ENCODE measurements at regions of chr3 and their contacts with region 1.

Region 1: GRCh38 chr3:128095222-128095703 is 28.3 kb downstream of the RUVBL1 start:
- DNase-seq: peak; percentile 65 to 87 (median 80)
- ATAC-seq: peak; percentile 99
- H3K4me3 ChIP-seq: no peak overlapping the region
- H3K4me3 Mint-ChIP-seq: no peak overlapping the region
- H3K27ac ChIP-seq: no peak overlapping the region
- H3K27ac Mint-ChIP-seq: peak overlapping the region; percentile 42
- H3K4me1 ChIP-seq: peaks cover 6% of the 10 kb centered on the region
- H3K4me1 Mint-ChIP-seq: peaks cover 11% of the 10 kb centered on the region
- H3K27me3 ChIP-seq: no peaks in the 10 kb centered on the region
- H3K27me3 Mint-ChIP-seq: no peaks in the 10 kb centered on the region
- CTCF ChIP-seq: peak; percentile 69

Region 2: DNA sequence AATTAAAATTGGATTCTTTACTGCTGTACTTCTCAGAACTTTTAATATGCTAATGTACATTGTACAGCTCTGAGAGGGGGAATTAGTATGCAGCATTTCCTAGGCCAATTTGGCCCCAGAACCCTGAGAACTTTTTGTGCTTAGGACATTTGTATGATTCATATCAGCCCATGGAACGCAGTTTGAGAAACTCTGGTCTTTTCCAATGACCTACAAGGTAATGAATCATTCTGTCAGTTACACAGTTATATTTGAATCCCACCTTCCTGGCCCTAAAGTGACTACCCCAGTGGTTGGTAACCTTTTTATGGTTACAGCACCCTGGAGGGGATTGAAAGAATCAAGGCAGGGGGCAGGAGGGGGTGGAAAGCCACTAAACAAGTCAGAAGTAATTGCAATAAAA is 205.8 kb before region 1 on chr3:
- CTCF ChIA-PET with region 1: no interaction called
- POLR2A ChIA-PET with region 1: no interaction called
- intact Hi-C with region 1: no loop called
- DNase-seq: no peak
- ATAC-seq: no peak
- H3K4me3 ChIP-seq: no peak overlapping the region
- H3K4me3 Mint-ChIP-seq: no peak overlapping the region
- H3K27ac ChIP-seq: no peak overlapping the region
- H3K27ac Mint-ChIP-seq: no peak overlapping the region
- H3K4me1 ChIP-seq: no peaks in the 10 kb centered on the region
- H3K4me1 Mint-ChIP-seq: no peaks in the 10 kb centered on the region
- H3K27me3 ChIP-seq: no peaks in the 10 kb centered on the region
- H3K27me3 Mint-ChIP-seq: no peaks in the 10 kb centered on the region
- CTCF ChIP-seq: no peak

Region 3: DNA sequence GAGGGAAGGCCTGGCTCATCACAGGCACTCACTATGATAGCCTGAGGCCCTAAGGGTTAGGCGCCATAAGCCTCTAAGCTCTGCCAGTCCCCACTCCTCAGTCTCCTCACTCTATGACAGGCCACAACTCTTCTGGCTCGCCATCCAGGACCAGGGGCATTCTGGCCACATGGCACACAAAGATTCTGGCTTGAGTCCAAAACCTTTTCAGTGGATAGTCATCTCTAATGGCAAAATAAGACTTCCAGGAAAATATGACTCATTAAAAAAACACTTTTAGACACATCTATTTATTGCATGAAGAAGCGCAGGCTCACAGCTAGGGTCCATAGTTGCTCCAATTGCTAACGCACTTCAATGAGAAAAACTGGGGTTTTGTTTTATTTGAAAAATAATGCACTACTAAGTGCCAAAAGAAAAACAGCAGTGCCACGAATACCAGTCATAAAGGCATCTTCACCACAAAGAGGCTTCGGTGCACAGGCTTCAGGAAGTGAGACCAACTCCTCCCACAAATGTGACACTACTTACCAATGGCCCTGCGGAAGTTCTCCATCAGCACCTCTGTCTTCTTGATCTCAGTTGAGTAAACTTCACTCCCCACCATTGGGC is 17.2 kb after region 1 on chr3:
- CTCF ChIA-PET with region 1: interaction called, 30 read pairs
- POLR2A ChIA-PET with region 1: no interaction called
- intact Hi-C with region 1: no loop called
- DNase-seq: peak in 7 of 9 experiments; percentile 24 to 86 (median 61)
- ATAC-seq: peak; percentile 92
- H3K4me3 ChIP-seq: no peak overlapping the region
- H3K4me3 Mint-ChIP-seq: peak overlapping the region; percentile 22
- H3K27ac ChIP-seq: peak overlapping the region; percentile 28 to 84
- H3K27ac Mint-ChIP-seq: peak overlapping the region; percentile 94
- H3K4me1 ChIP-seq: peaks cover 18% of the 10 kb centered on the region
- H3K4me1 Mint-ChIP-seq: peaks cover 48% of the 10 kb centered on the region
- H3K27me3 ChIP-seq: no peaks in the 10 kb centered on the region
- H3K27me3 Mint-ChIP-seq: no peaks in the 10 kb centered on the region
- CTCF ChIP-seq: no peak

Region 4: GRCh38 chr3:128133273-128134084 is 38.2 kb after region 1 on chr3:
- CTCF ChIA-PET with region 1: interaction called, 137 read pairs
- POLR2A ChIA-PET with region 1: interaction called, 5 read pairs
- intact Hi-C with region 1: loop called (anchors 1 kb)
- DNase-seq: peak; percentile 18 to 75 (median 57)
- ATAC-seq: peak; percentile 77
- H3K4me3 ChIP-seq: no peak overlapping the region
- H3K4me3 Mint-ChIP-seq: no peak overlapping the region
- H3K27ac ChIP-seq: no peak overlapping the region
- H3K27ac Mint-ChIP-seq: no peak overlapping the region
- H3K4me1 ChIP-seq: no peaks in the 10 kb centered on the region
- H3K4me1 Mint-ChIP-seq: no peaks in the 10 kb centered on the region
- H3K27me3 ChIP-seq: no peaks in the 10 kb centered on the region
- H3K27me3 Mint-ChIP-seq: peaks cover 3% of the 10 kb centered on the region
- CTCF ChIP-seq: peak; percentile 58

Region 5: GRCh38 chr3:128236657-128237056 is 141.4 kb after region 1 on chr3:
- CTCF ChIA-PET with region 1: no interaction called
- POLR2A ChIA-PET with region 1: no interaction called
- intact Hi-C with region 1: no loop called
- DNase-seq: no peak
- ATAC-seq: no peak
- H3K4me3 ChIP-seq: no peak overlapping the region
- H3K4me3 Mint-ChIP-seq: no peak overlapping the region
- H3K27ac ChIP-seq: no peak overlapping the region
- H3K27ac Mint-ChIP-seq: no peak overlapping the region
- H3K4me1 ChIP-seq: no peaks in the 10 kb centered on the region
- H3K4me1 Mint-ChIP-seq: peaks cover 40% of the 10 kb centered on the region
- H3K27me3 ChIP-seq: no peaks in the 10 kb centered on the region
- H3K27me3 Mint-ChIP-seq: no peaks in the 10 kb centered on the region
- CTCF ChIP-seq: no peak

Region 6: DNA sequence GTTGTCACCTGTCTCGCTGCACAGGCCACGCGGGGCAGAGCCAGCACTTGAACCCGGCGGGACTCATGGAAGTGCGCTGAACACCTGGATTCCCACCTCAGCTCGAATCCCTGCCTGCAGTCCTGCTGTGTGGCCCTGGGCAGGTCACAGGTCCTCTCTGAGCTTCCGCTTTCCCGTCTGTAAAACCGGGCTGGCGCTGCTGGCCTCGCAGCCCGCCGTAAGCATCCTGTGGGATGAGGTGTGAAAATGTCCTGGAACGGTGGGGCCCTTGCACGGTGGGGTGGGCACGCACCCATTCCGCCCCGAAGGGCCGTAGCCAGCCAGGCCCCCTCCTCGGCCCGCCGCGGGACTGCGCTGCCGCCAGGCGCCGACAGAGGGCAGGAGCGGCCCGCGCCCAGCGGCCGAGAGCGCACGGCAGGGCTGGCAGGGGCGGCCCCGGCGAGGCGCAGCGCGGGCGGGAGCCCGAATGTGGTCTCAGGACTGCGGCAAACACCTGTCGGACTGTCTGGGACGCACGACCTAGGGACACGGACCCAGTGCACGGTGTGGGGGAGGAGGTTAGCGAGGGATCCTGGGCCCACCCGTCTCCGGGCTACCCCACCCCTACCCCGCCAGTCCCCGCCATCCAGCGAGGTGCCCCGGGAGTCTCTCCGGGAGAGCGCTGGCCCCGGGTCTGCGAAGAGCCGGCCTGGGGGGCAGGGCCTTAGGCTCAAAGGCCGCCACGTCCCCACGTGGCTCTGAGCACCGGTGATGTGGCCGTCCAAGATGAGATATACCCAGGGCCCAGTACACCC is 331.1 kb after region 1 on chr3:
- CTCF ChIA-PET with region 1: interaction called, 6 read pairs
- POLR2A ChIA-PET with region 1: no interaction called
- intact Hi-C with region 1: loop called (anchors 5 to 10 kb)
- DNase-seq: peak in 8 of 9 experiments; percentile 21 to 76 (median 56)
- ATAC-seq: peak; percentile 98
- H3K4me3 ChIP-seq: peak overlapping the region in 1 of 2 experiments; percentile 20
- H3K4me3 Mint-ChIP-seq: no peak overlapping the region
- H3K27ac ChIP-seq: no peak overlapping the region
- H3K27ac Mint-ChIP-seq: no peak overlapping the region
- H3K4me1 ChIP-seq: peaks cover 4% of the 10 kb centered on the region
- H3K4me1 Mint-ChIP-seq: no peaks in the 10 kb centered on the region
- H3K27me3 ChIP-seq: peaks cover 0 to 2% of the 10 kb centered on the region in 2 experiments
- H3K27me3 Mint-ChIP-seq: peaks cover 17% of the 10 kb centered on the region
- CTCF ChIP-seq: peak; percentile 96

Region 7: GRCh38 chr3:128607710-128608048 is 512.4 kb after region 1 on chr3:
- CTCF ChIA-PET with region 1: interaction called, 11 read pairs
- POLR2A ChIA-PET with region 1: no interaction called
- intact Hi-C with region 1: loop called (anchors 1 kb)
- DNase-seq: no peak
- ATAC-seq: no peak
- H3K4me3 ChIP-seq: peak overlapping the region; percentile 57 to 76
- H3K4me3 Mint-ChIP-seq: no peak overlapping the region
- H3K27ac ChIP-seq: no peak overlapping the region
- H3K27ac Mint-ChIP-seq: no peak overlapping the region
- H3K4me1 ChIP-seq: peaks cover 5% of the 10 kb centered on the region
- H3K4me1 Mint-ChIP-seq: peaks cover 4% of the 10 kb centered on the region
- H3K27me3 ChIP-seq: peaks cover 0 to 2% of the 10 kb centered on the region in 2 experiments
- H3K27me3 Mint-ChIP-seq: peaks cover 3% of the 10 kb centered on the region
- CTCF ChIP-seq: no peak

Measured in CD8-positive, alpha-beta T cell (primary cell).